Heart right ventricle (tissue), 16 donors: ENCODE measurements at regions of chr20 and their contacts with region 1.

Region 1: DNA sequence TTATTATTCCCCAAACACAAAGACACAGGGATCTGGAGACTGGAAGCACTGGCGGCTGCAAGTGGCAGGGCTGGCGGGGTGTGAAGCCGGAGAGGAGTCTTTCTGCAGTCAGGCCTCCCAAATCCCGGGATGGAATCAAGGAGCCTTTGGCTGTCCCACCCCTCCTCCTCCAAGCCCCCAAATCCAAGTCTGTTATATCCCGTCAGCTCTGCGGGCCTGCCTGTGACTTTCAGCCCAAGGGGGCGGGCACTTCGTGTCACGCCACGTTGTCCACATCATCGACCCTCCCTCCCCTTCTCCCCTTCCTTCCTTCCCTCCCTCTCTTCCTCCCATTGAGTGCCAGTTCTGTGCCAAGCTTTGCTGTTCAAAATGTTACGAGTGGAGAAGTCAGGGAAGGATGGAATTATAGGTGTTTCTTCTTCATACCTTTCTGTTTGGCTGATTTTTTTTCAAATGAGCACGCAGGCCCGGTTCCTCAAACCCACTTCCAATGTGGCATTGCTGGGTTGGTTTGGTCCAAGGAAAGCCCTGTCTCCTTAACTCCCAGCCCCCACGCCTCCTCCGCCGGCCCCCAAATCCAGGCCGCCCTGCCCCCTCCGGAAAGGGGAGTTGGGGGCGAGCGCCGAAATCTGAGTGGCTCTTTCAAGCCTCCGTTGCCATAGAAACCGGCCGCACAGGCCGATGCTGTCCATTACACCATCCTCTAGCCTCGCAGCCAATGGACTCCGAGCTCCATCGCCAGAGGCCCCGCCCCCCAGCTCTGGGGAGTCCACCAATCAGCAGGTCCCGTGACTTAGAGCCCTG is 12.7 kb downstream of the ZCCHC3 start:
- DNase-seq: peak; percentile 96 to 99
- ATAC-seq: peak; percentile 99 to 100 (median 100)
- H3K4me3 ChIP-seq: peak overlapping the region; percentile 34 to 68 (median 60)
- H3K27ac ChIP-seq: peak overlapping the region; percentile 37 to 90 (median 83)
- H3K4me1 ChIP-seq: peaks cover 0 to 22% (median 19%) of the 10 kb centered on the region in 9 donors
- H3K27me3 ChIP-seq: no peaks in the 10 kb centered on the region
- CTCF ChIP-seq: no peak

Region 2: GRCh38 chr20:347640-348484 is 37.8 kb after region 1 on chr20:
- intact Hi-C with region 1: loop called in 1 of 10 experiments (anchors 2 kb)
- DNase-seq: peak; percentile 91 to 92
- ATAC-seq: peak; percentile 88 to 93 (median 91)
- H3K4me3 ChIP-seq: peak overlapping the region; percentile 43 to 83 (median 72)
- H3K27ac ChIP-seq: peak overlapping the region; percentile 84 to 97 (median 93)
- H3K4me1 ChIP-seq: peaks cover 0 to 26% (median 14%) of the 10 kb centered on the region in 9 donors
- H3K27me3 ChIP-seq: no peaks in the 10 kb centered on the region
- CTCF ChIP-seq: no peak

Region 3: GRCh38 chr20:438571-439469 is 128.8 kb after region 1 on chr20:
- intact Hi-C with region 1: no loop called
- DNase-seq: peak in 1 of 2 donors; percentile 35
- ATAC-seq: peak in 5 of 8 donors; percentile 23 to 43 (median 31)
- H3K4me3 ChIP-seq: peak overlapping the region in 1 of 10 donors; percentile 28
- H3K27ac ChIP-seq: peak overlapping the region in 5 of 10 donors; percentile 16 to 74 (median 41)
- H3K4me1 ChIP-seq: peaks cover 0 to 31% (median 18%) of the 10 kb centered on the region in 9 donors
- H3K27me3 ChIP-seq: no peaks in the 10 kb centered on the region
- CTCF ChIP-seq: no peak